Endothelial cell of umbilical vein (primary cell): ENCODE measurements at regions of chr7 and their contacts with region 1.

Region 1: DNA sequence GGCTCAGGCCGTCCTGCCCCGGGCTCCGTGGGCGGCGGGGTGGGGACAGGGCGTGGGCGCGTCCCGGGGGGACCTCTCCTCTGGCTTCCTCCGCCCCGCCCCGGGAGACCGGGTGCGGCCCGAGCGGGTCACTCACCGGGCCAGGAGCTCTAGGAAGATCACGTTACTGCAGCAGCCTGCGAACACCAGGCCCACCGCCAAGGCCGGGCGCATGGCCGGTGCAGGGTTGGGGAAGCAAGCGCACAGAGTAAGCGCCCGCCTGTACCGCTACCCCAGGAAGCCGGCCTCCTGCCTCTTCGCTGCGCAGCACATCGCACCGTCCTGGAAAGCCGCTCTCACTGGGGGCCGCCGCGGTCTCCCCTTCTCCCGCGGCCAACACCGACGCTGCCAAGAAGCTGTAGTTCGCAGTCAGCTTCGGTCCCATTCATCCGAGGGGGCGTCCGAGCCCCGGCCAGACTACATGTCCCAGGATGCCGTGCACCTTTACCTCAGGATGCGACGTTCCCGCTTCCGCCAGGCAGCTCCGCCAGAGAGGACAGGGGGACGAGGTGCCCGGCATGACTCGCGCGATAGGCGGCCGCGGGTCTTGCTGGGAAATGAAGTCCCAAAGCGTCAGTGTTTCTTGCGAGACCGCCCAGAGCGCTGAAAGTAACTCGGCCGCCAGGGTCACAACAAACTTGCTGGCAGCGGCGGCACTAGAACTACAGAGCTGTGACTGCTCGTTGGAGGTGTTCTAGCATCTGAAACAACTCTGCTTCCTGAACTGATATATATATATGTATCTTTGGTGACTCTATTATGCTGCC is at the start of gene SLC35B4:
- DNase-seq: peak; percentile 99
- H3K4me3 ChIP-seq: peak within 1 kb of the TSS; percentile 53 to 76 (median 72)
- H3K27ac ChIP-seq: peak within 1 kb of the TSS; percentile 30
- H3K4me1 ChIP-seq: peaks cover 11% of the 10 kb centered on the region
- H3K27me3 ChIP-seq: peaks cover 3% of the 10 kb centered on the region in 2 experiments
- CTCF ChIP-seq: peak in 1 of 2 donors; percentile 42
- POLR2A ChIP-seq: peak; percentile 57
- total RNA-seq, gene SLC35B4: 20.2 and 22.1 TPM in 2 replicates

Region 2: GRCh38 chr7:134126966-134127848 is 189.5 kb before region 1 on chr7 and contains the start of gene LRGUK:
- CTCF ChIA-PET with region 1: interaction called, 7 read pairs
- POLR2A ChIA-PET with region 1: no interaction called
- dilution Hi-C with region 1: no loop called
- intact Hi-C with region 1: loop called (anchors 5 kb)
- DNase-seq: peak; percentile 73
- H3K4me3 ChIP-seq: peak within 1 kb of the TSS; percentile 20 to 62 (median 46)
- H3K27ac ChIP-seq: no peak within 1 kb of the TSS
- H3K4me1 ChIP-seq: no peaks in the 10 kb centered on the region
- H3K27me3 ChIP-seq: peaks cover 11 to 39% of the 10 kb centered on the region in 2 experiments
- CTCF ChIP-seq: no peak
- POLR2A ChIP-seq: no peak
- total RNA-seq, gene LRGUK: 0.11 TPM in 1 of 2 replicates, not detected in the other

Region 3: GRCh38 chr7:134327896-134328295 is 11.2 kb after region 1 on chr7:
- CTCF ChIA-PET with region 1: interaction called, 14 read pairs
- POLR2A ChIA-PET with region 1: no interaction called
- dilution Hi-C with region 1: no loop called
- intact Hi-C with region 1: no loop called
- DNase-seq: peak; percentile 46
- H3K4me3 ChIP-seq: no peak overlapping the region
- H3K27ac ChIP-seq: no peak overlapping the region
- H3K4me1 ChIP-seq: no peaks in the 10 kb centered on the region
- H3K27me3 ChIP-seq: peaks cover 0 to 25% of the 10 kb centered on the region in 2 experiments
- CTCF ChIP-seq: peak; percentile 46 to 47
- POLR2A ChIP-seq: no peak

Region 4: GRCh38 chr7:134355927-134356326 is 39.2 kb after region 1 on chr7:
- CTCF ChIA-PET with region 1: interaction called, 9 read pairs
- POLR2A ChIA-PET with region 1: no interaction called
- dilution Hi-C with region 1: no loop called
- intact Hi-C with region 1: loop called (anchors 5 kb)
- DNase-seq: peak; percentile 21
- H3K4me3 ChIP-seq: no peak overlapping the region
- H3K27ac ChIP-seq: no peak overlapping the region
- H3K4me1 ChIP-seq: no peaks in the 10 kb centered on the region
- H3K27me3 ChIP-seq: peaks cover 4 to 8% of the 10 kb centered on the region in 2 experiments
- CTCF ChIP-seq: no peak
- POLR2A ChIP-seq: no peak

Region 5: DNA sequence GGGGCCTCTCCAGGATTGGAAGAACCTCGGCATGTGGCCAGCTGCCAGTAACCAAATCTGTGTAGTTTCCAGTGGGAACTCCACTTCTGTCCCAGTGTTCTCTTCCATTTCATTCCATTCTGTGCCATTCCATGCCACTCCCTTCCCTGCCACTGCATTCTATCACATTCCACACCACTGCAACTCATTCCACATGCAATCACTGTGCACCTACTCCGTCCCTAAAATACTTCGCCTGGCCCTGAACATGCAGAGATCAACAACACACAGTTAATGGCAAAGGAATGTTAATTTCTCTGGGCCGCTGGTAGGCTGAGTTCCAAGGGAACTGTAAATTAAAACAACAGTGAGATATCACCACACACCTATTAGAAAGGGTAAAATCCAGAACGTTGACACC is 77.3 kb after region 1 on chr7:
- CTCF ChIA-PET with region 1: no interaction called
- POLR2A ChIA-PET with region 1: no interaction called
- dilution Hi-C with region 1: no loop called
- intact Hi-C with region 1: no loop called
- DNase-seq: no peak
- H3K4me3 ChIP-seq: no peak overlapping the region
- H3K27ac ChIP-seq: no peak overlapping the region
- H3K4me1 ChIP-seq: no peaks in the 10 kb centered on the region
- H3K27me3 ChIP-seq: peaks cover 0 to 2% of the 10 kb centered on the region in 2 experiments
- CTCF ChIP-seq: no peak
- POLR2A ChIP-seq: no peak